H1 (cell line): ENCODE measurements at regions of chr1 and their contacts with region 1.

Region 1: DNA sequence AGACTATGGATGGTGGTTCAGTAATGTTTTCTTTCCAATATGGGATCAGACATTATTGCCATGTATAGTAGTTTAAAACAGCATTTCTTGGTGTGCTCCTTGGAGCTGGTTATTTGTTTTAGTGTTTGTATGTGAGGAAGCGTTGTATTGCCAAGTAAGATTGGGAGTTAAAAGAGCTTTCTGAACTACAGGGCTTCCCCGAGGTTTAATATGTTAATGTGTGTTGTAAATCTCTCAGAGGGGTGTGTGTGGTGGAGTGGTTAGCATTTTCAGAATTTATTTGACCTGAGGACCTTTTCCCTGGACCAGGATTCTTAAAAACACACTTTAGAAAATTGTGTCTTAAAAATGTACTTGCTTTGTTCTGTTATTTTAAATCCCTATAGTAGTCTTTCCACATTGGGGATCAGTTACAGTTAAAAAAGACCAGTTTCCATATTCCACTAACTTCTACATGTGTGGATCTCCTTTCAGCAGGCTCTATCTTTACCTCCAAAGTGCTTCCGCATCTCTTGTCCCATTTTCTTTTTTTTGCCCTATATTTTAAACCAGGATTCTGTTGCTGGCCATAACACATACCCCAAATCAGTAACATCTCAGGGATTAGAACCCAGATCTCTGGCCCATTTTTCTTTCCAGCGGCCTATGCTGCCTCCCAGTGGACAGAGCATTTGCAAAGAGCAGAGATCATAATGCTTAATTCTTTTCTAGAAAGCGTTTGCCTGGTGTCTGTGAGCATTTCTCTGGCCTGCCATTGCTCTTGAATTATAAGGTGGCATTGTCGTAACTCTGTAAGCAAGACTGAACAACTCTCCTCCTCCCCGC is 58.6 kb downstream of the PBX1 start:
- DNase-seq: peak; percentile 21 to 72
- H3K4me3 ChIP-seq: 0 out of 8 replicates have a peak overlapping the region, but pooled peaks of 1 of the 4 experiments have one; percentile 0
- H3K27ac ChIP-seq: no peak overlapping the region
- H3K4me1 ChIP-seq: peaks cover 13 to 46% (median 31%) of the 10 kb centered on the region in 4 experiments
- H3K27me3 ChIP-seq: no peaks in the 10 kb centered on the region
- CTCF ChIP-seq: peak; percentile 6 to 76 (median 76)
- EP300 ChIP-seq: no peak
- POLR2A ChIP-seq: no peak
- RAD21 ChIP-seq: peak; percentile 92 to 94

Region 2: GRCh38 chr1:164510435-164510834 is 107.2 kb before region 1 on chr1:
- CTCF ChIA-PET with region 1: interaction called, 10 read pairs
- POLR2A ChIA-PET with region 1: no interaction called
- DNase-seq: no peak
- H3K4me3 ChIP-seq: no peak overlapping the region
- H3K27ac ChIP-seq: no peak overlapping the region
- H3K4me1 ChIP-seq: peaks cover 0 to 4% (median 0%) of the 10 kb centered on the region in 4 experiments; a peak in 1 of 7 replicates
- H3K27me3 ChIP-seq: no peaks in the 10 kb centered on the region
- CTCF ChIP-seq: peak in 1 of 3 experiments; percentile 4; a peak in 1 of 4 replicates
- EP300 ChIP-seq: no peak
- POLR2A ChIP-seq: no peak
- RAD21 ChIP-seq: peak; percentile 46 to 61

Region 3: DNA sequence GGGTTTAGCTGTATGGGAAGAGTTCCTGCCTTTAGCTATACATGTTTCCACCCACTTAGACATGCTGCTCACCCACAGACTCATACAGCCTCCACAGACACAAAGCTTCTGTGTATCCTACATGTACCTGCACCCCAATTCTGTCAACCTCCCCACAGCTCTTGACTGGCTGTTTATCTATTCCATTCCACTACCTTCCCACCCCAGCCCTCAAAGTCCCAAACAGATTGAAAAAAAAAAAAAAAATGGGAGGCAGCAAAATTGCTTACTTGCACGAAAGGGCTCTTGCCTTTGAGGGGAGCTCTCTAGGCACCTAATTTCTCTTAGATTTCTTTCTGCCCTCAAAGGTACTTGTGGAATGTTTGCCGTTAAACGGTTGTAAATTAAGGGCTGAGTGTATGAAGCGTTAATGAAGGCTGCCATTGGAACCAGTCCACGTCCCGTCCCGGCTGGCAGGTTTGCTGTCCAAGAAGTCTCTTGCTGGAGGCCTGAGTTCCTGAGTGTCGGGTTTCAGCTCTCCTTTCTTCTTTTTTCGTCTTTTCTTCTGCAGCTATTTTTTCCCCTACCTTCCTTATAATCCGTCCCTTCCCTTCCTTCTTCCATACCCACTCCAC is 15.0 kb before region 1 on chr1:
- CTCF ChIA-PET with region 1: interaction called, 14 read pairs
- POLR2A ChIA-PET with region 1: interaction called, 15 read pairs
- DNase-seq: peak in 1 of 2 experiments; percentile 49
- H3K4me3 ChIP-seq: peak overlapping the region in 3 of 4 experiments; percentile 20 to 44 (median 20); a peak in 4 of 8 replicates
- H3K27ac ChIP-seq: peak overlapping the region; percentile 60
- H3K4me1 ChIP-seq: peaks cover 17 to 44% (median 43%) of the 10 kb centered on the region in 4 experiments
- H3K27me3 ChIP-seq: no peaks in the 10 kb centered on the region
- CTCF ChIP-seq: no peak
- EP300 ChIP-seq: no peak
- POLR2A ChIP-seq: no peak
- RAD21 ChIP-seq: peak in 1 of 2 experiments; percentile 9; a peak in 1 of 4 replicates

Region 4: DNA sequence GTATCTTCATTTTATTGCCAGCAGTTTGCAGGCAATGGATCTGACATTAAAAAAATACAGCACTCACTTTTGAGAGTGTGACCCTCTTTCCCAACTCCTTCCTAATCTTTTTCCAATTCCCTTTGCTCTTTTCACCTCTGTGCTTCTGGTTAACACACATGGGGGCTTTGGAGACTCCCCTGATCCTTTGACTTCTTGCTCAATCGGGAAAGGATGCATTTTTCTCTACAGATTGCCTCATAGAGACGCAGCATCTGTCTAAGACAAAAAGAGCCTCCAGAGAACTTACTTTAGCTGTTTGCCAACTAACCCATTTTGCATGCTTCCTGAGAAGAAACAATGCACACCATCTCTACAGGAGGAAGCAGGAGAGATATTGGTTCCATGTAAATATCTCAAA is 319.7 kb after region 1 on chr1:
- CTCF ChIA-PET with region 1: no interaction called
- POLR2A ChIA-PET with region 1: no interaction called
- DNase-seq: no peak
- H3K4me3 ChIP-seq: no peak overlapping the region
- H3K27ac ChIP-seq: no peak overlapping the region
- H3K4me1 ChIP-seq: no peaks in the 10 kb centered on the region; a peak in 1 of 7 replicates
- H3K27me3 ChIP-seq: no peaks in the 10 kb centered on the region
- CTCF ChIP-seq: no peak
- EP300 ChIP-seq: no peak
- POLR2A ChIP-seq: no peak
- RAD21 ChIP-seq: no peak